GM13976 (cell line): ENCODE measurements at regions of chr12 and their contacts with region 1.

Region 1: DNA sequence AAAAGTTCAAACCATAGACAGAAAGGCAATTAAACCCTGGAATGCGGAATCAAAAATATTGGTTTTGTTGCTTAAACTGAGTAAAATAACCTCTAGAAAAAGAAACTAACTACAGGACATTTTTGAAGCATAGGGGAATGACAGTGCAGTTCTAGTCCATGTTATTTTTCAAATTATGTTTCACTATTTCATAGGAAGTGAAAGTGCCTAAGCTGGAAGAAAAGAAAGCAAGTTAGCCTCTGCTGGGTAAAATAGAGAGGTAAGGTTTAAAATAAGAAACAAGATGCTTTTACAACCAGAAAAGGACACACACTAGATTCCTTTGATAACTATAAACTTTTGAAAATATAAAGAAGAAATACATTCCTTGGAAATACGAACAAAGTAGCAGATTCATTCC is 1.1 kb downstream of the CLECL1 start:
- DNase-seq: no peak
- CTCF ChIP-seq: no peak

Region 2: DNA sequence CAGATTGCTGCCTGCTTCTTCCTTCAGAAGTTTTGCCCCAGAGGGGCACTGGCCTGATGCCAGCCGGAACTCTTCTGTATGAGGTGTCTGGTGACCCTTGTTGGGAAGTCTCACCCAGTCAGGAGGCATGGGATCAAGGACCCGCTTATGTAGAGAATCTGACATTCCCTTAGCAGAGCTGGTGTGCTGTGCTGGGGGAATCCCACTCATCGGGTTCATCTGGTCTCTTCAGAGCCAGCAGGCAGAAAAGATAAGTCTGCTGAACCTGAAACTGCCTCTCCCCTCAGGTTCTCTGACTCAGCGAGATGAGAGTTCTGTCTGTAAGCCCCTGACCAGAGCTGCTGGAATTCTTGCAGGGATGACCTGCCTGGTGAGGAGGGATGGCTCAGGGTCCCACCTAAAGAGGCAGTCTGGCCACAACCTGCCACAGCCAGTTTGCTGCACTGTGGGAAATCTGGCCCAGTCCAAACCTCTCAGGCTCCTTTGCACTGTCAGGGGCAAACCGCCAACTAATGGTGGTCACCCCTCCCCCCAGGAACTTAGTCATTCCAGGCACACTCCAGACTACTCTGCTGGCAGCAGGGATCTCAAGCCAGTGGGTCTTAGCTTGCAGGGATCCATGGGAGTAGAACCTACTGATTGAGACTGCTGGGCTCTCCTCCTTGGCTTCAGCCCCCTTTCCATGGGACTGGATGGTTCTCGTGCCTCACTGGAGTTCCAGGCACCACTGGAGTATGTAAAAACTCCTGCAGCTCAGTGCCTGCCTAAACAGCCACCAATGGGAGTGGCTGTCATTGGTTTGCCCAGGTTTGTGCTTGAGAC is 58.2 kb before region 1 on chr12:
- in situ Hi-C with region 1: loop called (anchors 5 kb)
- DNase-seq: peak; percentile 30
- CTCF ChIP-seq: no peak

Region 3: GRCh38 chr12:10454531-10454930 is 722.7 kb after region 1 on chr12:
- in situ Hi-C with region 1: no loop called
- DNase-seq: no peak
- CTCF ChIP-seq: no peak